Gastrocnemius medialis (tissue), 4 donors: ENCODE measurements at regions of chr1 and their contacts with region 1.

Region 1: DNA sequence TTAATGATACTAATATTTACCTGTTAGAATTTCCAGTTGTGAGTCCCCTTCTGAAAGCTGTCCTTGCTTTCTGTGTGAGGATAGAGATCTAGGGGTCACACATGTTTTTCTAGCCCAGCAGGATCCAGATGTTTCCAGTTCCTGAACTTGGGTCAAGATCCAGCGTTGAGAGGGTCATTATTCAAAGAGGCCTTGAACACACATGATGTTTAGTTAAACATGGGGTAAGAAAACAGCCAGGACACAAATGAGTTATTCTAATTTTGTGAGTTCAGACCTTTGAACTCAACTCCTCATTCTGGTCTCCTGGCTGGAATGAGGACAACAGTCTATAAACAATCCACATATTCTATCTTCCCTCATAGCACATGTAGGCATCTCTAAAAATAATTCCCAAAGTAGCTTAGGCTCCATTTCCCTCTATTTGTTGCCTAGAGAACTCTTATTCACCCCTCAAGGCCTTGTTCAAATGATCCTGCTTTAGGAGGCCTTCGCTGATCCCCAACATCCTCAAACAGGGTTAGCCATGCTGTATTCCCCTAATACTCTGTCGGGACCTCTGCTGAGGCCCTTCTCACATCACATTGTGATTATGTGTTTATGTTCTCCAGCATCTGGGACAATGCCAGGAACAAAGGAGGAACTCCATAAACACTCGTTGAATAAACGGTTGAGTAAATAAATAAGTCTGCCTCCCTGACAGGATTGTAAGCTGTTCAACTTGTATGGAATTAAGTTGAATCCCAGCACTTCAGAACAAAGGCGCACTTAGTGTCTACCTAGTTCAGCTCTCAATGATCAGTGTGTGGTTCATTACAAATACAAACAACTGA is 15.0 kb upstream of the KCNN3 start:
- DNase-seq: no peak
- ATAC-seq: no peak
- H3K4me3 ChIP-seq: no peak overlapping the region
- H3K27ac ChIP-seq: no peak overlapping the region
- H3K4me1 ChIP-seq: no peaks in the 10 kb centered on the region
- H3K27me3 ChIP-seq: no peaks in the 10 kb centered on the region
- CTCF ChIP-seq: no peak
- POLR2A ChIP-seq: no peak

Region 2: DNA sequence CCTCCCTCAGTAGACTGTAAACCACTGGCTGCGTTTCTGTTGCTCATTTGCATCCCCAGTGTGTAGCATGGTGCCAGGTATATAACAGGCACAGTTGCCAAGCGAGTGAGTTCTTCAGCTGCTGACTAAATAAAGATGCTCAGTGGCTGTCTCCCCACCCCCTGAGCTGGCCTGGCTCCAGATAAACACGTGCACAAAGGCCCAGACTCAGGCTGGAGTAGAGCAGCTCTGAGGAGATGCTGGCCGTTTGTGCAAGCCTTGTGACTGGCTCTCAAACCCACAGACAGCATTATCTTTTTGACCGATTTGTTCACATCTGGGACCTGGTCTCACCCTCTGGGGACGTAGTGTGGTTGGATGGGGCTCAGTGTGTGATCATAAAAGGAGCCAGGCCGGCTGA is 310.4 kb before region 1 on chr1:
- in situ Hi-C with region 1: loop called in 3 of 4 experiments (anchors 10 kb)
- intact Hi-C with region 1: no loop called
- DNase-seq: no peak
- ATAC-seq: no peak
- H3K4me3 ChIP-seq: no peak overlapping the region
- H3K27ac ChIP-seq: no peak overlapping the region
- H3K4me1 ChIP-seq: no peaks in the 10 kb centered on the region
- H3K27me3 ChIP-seq: no peaks in the 10 kb centered on the region
- CTCF ChIP-seq: no peak
- POLR2A ChIP-seq: no peak

Region 3: DNA sequence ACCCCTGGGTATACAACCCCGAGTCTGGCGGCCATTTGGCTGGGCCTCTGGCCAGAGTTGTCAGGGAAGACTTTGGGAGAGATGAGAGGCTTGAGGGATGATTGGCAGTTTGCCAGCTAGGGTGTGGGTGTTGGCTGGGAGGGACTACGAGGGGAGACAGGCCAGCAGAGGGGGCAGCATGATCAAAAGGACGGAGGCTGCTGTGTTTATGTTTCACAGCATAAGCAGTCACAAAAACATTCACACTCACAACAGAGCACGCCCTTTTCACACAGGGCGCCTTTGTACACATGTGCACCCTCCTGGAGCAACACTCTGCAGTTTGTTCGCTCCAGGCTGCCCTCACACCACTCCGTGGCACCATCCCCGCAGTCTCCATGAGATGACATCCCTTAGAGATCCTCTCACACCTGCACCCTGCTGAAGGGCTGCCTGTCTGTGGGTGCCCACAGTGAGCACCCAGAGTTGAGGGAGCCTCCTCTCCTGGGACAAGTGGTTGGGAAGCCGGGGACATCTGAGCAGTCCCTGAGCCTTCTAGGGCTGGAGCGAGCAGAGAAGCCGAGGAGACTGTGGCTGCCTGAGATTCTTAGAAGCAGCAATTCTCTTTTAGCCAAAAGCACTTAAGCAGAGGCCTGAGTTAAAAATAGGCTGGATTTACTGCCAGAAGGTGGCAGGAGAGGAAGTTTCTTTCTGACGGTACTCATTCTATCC is 209.0 kb after region 1 on chr1:
- in situ Hi-C with region 1: no loop called
- intact Hi-C with region 1: no loop called
- DNase-seq: no peak
- ATAC-seq: peak; percentile 53 to 58
- H3K4me3 ChIP-seq: no peak overlapping the region
- H3K27ac ChIP-seq: peak overlapping the region in 2 of 4 donors; percentile 14 to 55
- H3K4me1 ChIP-seq: peaks cover 12 to 13% of the 10 kb centered on the region in 2 donors
- H3K27me3 ChIP-seq: no peaks in the 10 kb centered on the region
- CTCF ChIP-seq: peak in 4 of 5 experiments; percentile 18 to 46 (median 26)
- POLR2A ChIP-seq: no peak

Region 4: GRCh38 chr1:155227261-155228095 is 342.4 kb after region 1 on chr1:
- in situ Hi-C with region 1: no loop called
- intact Hi-C with region 1: no loop called
- DNase-seq: peak; percentile 97 to 99
- ATAC-seq: peak; percentile 99 to 100
- H3K4me3 ChIP-seq: peak overlapping the region; percentile 55 to 92 (median 70)
- H3K27ac ChIP-seq: peak overlapping the region; percentile 77 to 83 (median 78)
- H3K4me1 ChIP-seq: peaks cover 8 to 15% of the 10 kb centered on the region in 2 donors
- H3K27me3 ChIP-seq: no peaks in the 10 kb centered on the region
- CTCF ChIP-seq: peak in 1 of 5 experiments; percentile 3
- POLR2A ChIP-seq: peak; percentile 53 to 74